Posterior cingulate gyrus (tissue), 11 donors: ENCODE measurements at regions of chr1 and their contacts with region 1.

Region 1: DNA sequence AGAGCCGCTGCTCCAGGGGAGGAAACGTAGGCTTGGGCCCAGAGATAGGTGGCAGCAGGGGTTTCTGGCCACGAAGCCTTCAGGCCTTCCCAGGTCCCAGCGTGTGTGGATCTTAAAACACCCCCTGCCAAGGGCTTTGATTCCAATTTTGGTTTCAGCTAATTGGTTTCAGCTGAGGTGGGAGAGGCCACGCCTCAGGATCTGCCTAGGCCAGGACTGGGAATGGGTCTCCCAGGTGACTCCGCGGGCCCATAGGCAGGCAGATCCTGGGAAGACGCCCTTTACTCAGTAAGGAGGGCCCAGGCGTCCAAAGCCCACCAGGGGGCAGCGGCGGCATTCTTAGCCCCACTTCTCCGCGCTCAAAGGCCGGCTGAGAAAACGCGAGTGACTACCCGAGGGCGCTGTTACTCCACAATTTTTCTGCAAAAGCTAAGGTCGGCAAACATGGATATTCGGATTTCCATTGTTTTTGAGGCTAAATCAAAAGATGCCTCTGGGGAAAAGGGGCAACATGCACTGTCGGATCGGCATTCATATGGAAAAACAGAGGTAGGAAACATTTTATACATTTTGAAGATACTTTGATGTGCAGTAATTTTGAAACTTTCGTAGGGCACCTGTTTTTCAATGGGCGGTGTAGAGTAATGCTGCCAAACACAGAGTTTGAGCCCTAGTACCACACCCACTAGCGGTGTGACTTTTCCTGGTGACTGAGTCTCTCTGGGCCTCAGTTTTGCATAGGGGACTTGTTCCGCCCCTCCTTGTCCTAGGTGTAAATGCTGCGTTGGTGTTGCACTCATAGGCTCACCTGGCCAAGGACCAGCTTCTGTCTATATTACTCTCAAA is 31.8 kb upstream of the BCL10 start:
- DNase-seq: peak; percentile 53 to 97 (median 83)

Region 2: GRCh38 chr1:85379203-85380136 is 71.3 kb after region 1 on chr1:
- intact Hi-C with region 1: no loop called
- DNase-seq: no peak

Region 3: GRCh38 chr1:85580872-85581801 is 272.9 kb after region 1 on chr1:
- intact Hi-C with region 1: loop called (anchors 10 kb)
- DNase-seq: peak in 9 of 10 donors; percentile 26 to 90 (median 44)

Region 4: GRCh38 chr1:85692730-85693314 is 384.6 kb after region 1 on chr1:
- intact Hi-C with region 1: loop called (anchors 2 kb)
- DNase-seq: no peak

Region 5: GRCh38 chr1:86018283-86018923 is 710.2 kb after region 1 on chr1:
- intact Hi-C with region 1: loop called (anchors 2 kb)
- DNase-seq: no peak